ENCODE measurements at regions of chr2 and their contacts with region 1.

Region 1: GRCh38 chr2:241877989-241878970 is 8.8 kb downstream of the RTP5 start:
- DNase-seq: peak in 9 of 10 donors; percentile 54 to 97 (median 80)

Region 2: DNA sequence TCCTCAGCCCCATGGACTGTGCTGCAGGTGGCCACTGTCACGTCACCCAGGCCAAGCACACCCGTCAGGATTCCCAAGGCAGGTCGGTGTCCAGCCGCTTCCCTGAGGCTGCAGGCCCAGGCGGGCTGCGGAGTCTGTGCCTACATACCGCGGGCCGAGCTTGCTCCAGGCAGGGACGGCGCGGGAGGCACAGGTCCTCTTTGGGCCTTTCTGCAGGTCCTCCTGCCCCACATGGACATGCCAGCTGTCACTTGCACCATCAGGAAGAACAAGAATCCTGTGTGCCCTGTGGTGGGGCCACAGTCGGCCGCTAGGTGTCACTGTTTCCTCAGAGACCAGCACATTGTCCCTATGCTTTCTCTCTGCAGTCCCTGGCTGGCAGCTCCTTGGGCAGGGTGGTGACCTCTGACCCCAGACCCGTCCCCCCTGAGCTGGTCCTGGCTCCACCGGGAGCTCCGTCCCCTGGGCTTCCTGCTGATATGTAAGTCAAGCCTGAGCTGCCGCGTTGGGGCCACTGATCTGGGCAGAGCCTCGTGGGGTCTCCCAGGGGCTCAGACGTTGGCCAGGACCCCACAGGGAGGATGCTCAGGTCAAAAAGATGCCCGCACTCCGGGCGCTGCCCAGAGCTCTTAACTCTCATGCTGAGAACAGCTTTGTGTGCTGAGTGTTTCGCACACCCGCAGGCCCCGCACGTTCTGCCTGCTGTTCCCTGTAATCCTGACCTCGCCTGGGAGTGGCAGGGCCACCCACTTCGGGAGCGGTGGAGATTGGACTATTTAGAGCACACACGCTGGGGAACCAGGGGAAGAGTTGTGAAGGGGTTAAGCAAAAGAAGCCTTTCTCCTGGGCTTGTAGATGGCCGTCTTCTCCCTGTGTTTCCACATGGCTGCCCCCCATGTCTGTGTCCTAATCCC is 1026.9 kb before region 1 on chr2:
- intact Hi-C with region 1: loop called (anchors 10 kb)
- DNase-seq: peak; percentile 78 to 98 (median 92)

Region 3: GRCh38 chr2:241734467-241735208 is 143.6 kb before region 1 on chr2 and contains the start of gene D2HGDH:
- intact Hi-C with region 1: loop called (anchors 5 kb)
- DNase-seq: peak; percentile 86 to 98 (median 92)

Region 4: DNA sequence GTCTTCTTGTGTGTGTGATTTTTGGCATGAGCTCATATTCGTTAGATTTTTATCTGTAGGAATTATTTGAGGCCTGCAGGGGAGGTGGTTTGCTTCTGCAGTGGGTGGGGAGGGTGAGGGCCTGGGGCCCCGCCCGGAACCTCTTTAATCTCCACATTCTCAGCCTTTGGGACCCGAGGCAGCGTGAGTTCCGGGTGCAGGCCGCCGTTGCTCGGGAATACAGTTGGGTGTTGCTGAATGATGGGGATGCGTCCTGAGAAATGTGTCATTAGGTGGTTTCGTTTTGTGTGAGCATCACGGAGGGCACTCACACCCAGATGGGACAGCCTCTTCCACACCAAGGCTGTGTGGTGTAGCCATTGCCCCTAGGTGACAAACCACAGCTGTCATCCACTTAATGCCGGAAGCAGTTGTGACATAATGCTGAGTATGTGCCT is 115.3 kb before region 1 on chr2:
- intact Hi-C with region 1: no loop called
- DNase-seq: peak in 2 of 10 donors; percentile 42 to 73

Measured in posterior cingulate gyrus (tissue), 11 donors.